Posterior vena cava (tissue), 2 donors: ENCODE measurements at regions of chr11 and their contacts with region 1.

Region 1: GRCh38 chr11:72413914-72414628 is 20.3 kb downstream of the CLPB start:
- DNase-seq: peak; percentile 95

Region 2: GRCh38 chr11:72293910-72294615 is 120.0 kb before region 1 on chr11:
- intact Hi-C with region 1: loop called (anchors 10 kb)
- DNase-seq: no peak

Region 3: GRCh38 chr11:72456651-72457050 is 42.6 kb after region 1 on chr11:
- intact Hi-C with region 1: no loop called
- DNase-seq: no peak

Region 4: GRCh38 chr11:72598906-72599305 is 184.8 kb after region 1 on chr11:
- intact Hi-C with region 1: no loop called
- DNase-seq: no peak

Region 5: GRCh38 chr11:73480677-73481076 is 1066.6 kb after region 1 on chr11:
- intact Hi-C with region 1: no loop called
- DNase-seq: no peak